A549 (cell line): ENCODE measurements at regions of chr3 and their contacts with region 1.

Region 1: GRCh38 chr3:100057716-100058575 is 56.4 kb downstream of the FILIP1L start:
- DNase-seq: no peak
- ATAC-seq: no peak
- H3K4me3 ChIP-seq: no peak overlapping the region
- H3K27ac ChIP-seq: no peak overlapping the region
- H3K4me1 ChIP-seq: no peaks in the 10 kb centered on the region
- CTCF ChIP-seq: no peak
- EP300 ChIP-seq: no peak
- POLR2A ChIP-seq: no peak
- RAD21 ChIP-seq: no peak; a peak in 1 of 5 replicates

Region 2: GRCh38 chr3:100047455-100048141 is 10.3 kb before region 1 on chr3:
- CTCF ChIA-PET with region 1: interaction called, 11 read pairs
- POLR2A ChIA-PET with region 1: no interaction called
- DNase-seq: peak; percentile 12 to 65
- ATAC-seq: peak; percentile 83 to 90
- H3K4me3 ChIP-seq: no peak overlapping the region
- H3K27ac ChIP-seq: peak overlapping the region; percentile 72 to 73
- H3K4me1 ChIP-seq: peaks cover 43% of the 10 kb centered on the region
- CTCF ChIP-seq: no peak
- EP300 ChIP-seq: peak in 1 of 2 experiments; percentile 30; a peak in 2 of 5 replicates
- POLR2A ChIP-seq: no peak
- RAD21 ChIP-seq: peak in 1 of 2 experiments; percentile 39; a peak in 1 of 5 replicates